ENCODE measurements at regions of chr5 and their contacts with region 1.

Region 1: DNA sequence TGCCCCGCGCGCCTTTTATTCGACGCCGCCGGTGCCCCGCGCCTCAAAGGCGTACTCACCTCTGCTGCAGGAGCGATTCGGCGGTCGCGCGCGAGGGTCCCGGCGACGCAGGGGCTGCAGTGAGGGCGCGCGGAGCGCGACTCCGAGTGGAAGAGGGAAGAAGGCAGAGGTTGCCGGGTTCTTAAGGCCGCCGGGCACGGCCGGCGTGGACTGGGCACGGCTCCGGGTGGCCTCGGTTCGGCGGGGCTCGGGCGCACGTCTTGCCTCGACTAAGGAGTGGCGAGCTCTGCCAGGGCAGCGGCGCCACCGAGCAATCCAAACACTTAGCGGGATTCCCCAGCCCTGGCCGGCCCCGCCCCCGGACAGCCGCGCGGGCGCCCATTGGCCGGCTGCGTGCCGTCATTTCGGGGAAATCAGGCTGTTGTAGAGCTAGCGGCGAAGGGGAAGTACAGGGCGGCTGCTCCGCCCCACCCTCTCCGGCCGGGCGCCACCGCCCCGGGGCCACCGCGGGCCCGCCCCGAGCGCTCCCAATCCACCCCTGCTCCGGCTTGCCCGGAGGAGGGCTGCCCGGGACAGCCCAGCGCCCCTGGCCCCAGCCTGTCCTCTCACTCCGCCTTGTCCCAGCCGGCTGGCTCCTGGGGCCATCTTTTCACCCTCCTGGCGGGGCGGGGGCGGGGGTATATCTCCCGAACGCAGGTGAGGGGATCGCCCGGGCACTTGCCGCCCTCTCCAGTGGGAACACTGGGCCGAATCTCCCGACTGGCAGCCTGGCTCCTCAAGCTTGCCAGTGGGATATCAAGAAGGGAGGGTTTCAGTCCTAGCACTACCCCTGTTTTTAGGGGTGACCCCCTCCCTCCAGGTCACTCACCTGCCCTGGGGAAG is at the start of gene IRF1:
- DNase-seq: peak; percentile 97 to 99 (median 98)
- ATAC-seq: peak; percentile 78 to 80
- H3K4me3 Mint-ChIP-seq: peak within 1 kb of the TSS; percentile 93 to 97 (median 96)
- H3K27ac Mint-ChIP-seq: peak within 1 kb of the TSS; percentile 96 to 98 (median 98)
- H3K4me1 Mint-ChIP-seq: peaks cover 46 to 79% (median 76%) of the 10 kb centered on the region in 4 donors
- H3K27me3 Mint-ChIP-seq: no peaks in the 10 kb centered on the region
- polyA plus RNA-seq, gene IRF1: 108 to 218 (median 141) TPM

Region 2: GRCh38 chr5:132064738-132065331 is 425.9 kb before region 1 on chr5:
- POLR2A ChIA-PET with region 1: no interaction called
- DNase-seq: peak; percentile 49 to 83 (median 70)
- ATAC-seq: peak; percentile 74 to 80
- H3K4me3 Mint-ChIP-seq: no peak overlapping the region
- H3K27ac Mint-ChIP-seq: peak overlapping the region in 1 of 10 donors; percentile 37
- H3K4me1 Mint-ChIP-seq: peaks cover 7 to 13% (median 10%) of the 10 kb centered on the region in 4 donors
- H3K27me3 Mint-ChIP-seq: no peaks in the 10 kb centered on the region

Region 3: GRCh38 chr5:132369474-132370180 is 121.1 kb before region 1 on chr5 and contains the start of gene SLC22A5:
- POLR2A ChIA-PET with region 1: interaction called, 12 read pairs
- DNase-seq: peak; percentile 60 to 83 (median 75)
- ATAC-seq: peak; percentile 92 to 93
- H3K4me3 Mint-ChIP-seq: peak within 1 kb of the TSS; percentile 75 to 91 (median 87)
- H3K27ac Mint-ChIP-seq: peak within 1 kb of the TSS; percentile 83 to 94 (median 90)
- H3K4me1 Mint-ChIP-seq: peaks cover 18 to 35% (median 32%) of the 10 kb centered on the region in 4 donors
- H3K27me3 Mint-ChIP-seq: no peaks in the 10 kb centered on the region
- polyA plus RNA-seq, gene SLC22A5: 1.9 to 3.2 (median 2.0) TPM

Region 4: GRCh38 chr5:132394667-132395259 is 96.0 kb before region 1 on chr5:
- POLR2A ChIA-PET with region 1: interaction called, 96 read pairs
- DNase-seq: no peak
- ATAC-seq: peak in 1 of 2 donors; percentile 37
- H3K4me3 Mint-ChIP-seq: peak overlapping the region in 4 of 10 donors; percentile 2 to 14 (median 9)
- H3K27ac Mint-ChIP-seq: peak overlapping the region in 9 of 10 donors; percentile 48 to 92 (median 80)
- H3K4me1 Mint-ChIP-seq: peaks cover 24 to 71% (median 62%) of the 10 kb centered on the region in 4 donors
- H3K27me3 Mint-ChIP-seq: no peaks in the 10 kb centered on the region

Region 5: GRCh38 chr5:132419502-132420468 is 70.9 kb before region 1 on chr5:
- POLR2A ChIA-PET with region 1: interaction called, 142 read pairs
- DNase-seq: peak; percentile 27 to 78 (median 60)
- ATAC-seq: peak; percentile 65 to 69
- H3K4me3 Mint-ChIP-seq: peak overlapping the region; percentile 69 to 87 (median 78)
- H3K27ac Mint-ChIP-seq: peak overlapping the region; percentile 85 to 98 (median 94)
- H3K4me1 Mint-ChIP-seq: peaks cover 46 to 100% (median 91%) of the 10 kb centered on the region in 4 donors
- H3K27me3 Mint-ChIP-seq: no peaks in the 10 kb centered on the region

Region 6: GRCh38 chr5:132431632-132432031 is 59.1 kb before region 1 on chr5:
- POLR2A ChIA-PET with region 1: interaction called, 142 read pairs
- DNase-seq: no peak
- ATAC-seq: peak in 1 of 2 donors; percentile 16
- H3K4me3 Mint-ChIP-seq: peak overlapping the region in 7 of 10 donors; percentile 1 to 76 (median 48)
- H3K27ac Mint-ChIP-seq: peak overlapping the region in 9 of 10 donors; percentile 51 to 100 (median 93)
- H3K4me1 Mint-ChIP-seq: peaks cover 60 to 96% (median 90%) of the 10 kb centered on the region in 4 donors
- H3K27me3 Mint-ChIP-seq: no peaks in the 10 kb centered on the region

Region 7: DNA sequence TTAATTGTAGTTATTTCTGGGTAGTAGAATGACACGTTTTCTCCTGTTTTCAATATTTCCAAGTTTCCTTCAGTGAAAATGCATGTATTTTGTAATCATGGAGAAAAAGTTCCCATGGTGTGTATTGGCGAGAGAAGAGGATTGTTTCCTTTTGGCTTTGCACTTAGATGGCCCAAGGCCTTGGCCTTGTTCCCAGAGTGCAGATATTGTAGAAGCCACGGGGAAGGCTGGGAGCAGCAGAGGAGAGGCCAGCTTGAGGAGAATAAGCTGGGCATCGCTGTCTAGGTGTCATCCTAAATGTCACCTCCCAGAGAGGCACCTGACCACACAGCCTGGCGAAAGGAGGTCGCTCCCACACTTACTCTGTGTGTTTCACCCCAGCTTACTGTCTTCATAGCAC is 44.1 kb before region 1 on chr5:
- POLR2A ChIA-PET with region 1: interaction called, 24 read pairs
- DNase-seq: no peak
- ATAC-seq: peak in 1 of 2 donors; percentile 40
- H3K4me3 Mint-ChIP-seq: peak overlapping the region; percentile 6 to 74 (median 48)
- H3K27ac Mint-ChIP-seq: peak overlapping the region in 8 of 10 donors; percentile 25 to 89 (median 68)
- H3K4me1 Mint-ChIP-seq: peaks cover 47 to 91% (median 84%) of the 10 kb centered on the region in 4 donors
- H3K27me3 Mint-ChIP-seq: no peaks in the 10 kb centered on the region

Region 8: GRCh38 chr5:132466433-132467286 is 24.1 kb before region 1 on chr5:
- POLR2A ChIA-PET with region 1: interaction called, 648 read pairs
- DNase-seq: peak in 8 of 10 donors; percentile 40 to 79 (median 73)
- ATAC-seq: peak; percentile 78 to 79
- H3K4me3 Mint-ChIP-seq: peak overlapping the region; percentile 70 to 83 (median 76)
- H3K27ac Mint-ChIP-seq: peak overlapping the region; percentile 90 to 97 (median 95)
- H3K4me1 Mint-ChIP-seq: peaks cover 48 to 100% (median 96%) of the 10 kb centered on the region in 4 donors
- H3K27me3 Mint-ChIP-seq: no peaks in the 10 kb centered on the region

Region 9: DNA sequence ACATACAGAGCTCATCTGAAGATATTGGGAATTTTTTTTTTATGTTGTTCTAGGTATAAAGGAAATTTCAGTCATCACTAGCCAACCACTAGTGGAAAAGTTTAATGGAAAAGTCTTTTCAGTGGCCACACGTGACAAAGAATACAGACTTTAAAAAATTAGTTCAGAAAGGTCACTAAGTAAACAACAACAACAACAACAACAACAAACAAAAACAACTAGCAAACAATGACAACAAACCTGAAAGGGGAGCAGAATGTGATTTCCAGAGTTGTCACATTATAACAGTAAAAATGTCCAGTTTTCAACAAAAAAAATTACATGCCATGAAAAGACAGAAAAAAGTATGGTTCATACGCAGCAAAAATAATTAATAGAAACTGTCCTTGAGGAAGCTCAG is 18.5 kb after region 1 on chr5:
- POLR2A ChIA-PET with region 1: no interaction called
- DNase-seq: no peak
- ATAC-seq: no peak
- H3K4me3 Mint-ChIP-seq: no peak overlapping the region
- H3K27ac Mint-ChIP-seq: no peak overlapping the region
- H3K4me1 Mint-ChIP-seq: peaks cover 0 to 4% (median 0%) of the 10 kb centered on the region in 4 donors
- H3K27me3 Mint-ChIP-seq: peaks cover 14 to 47% (median 17%) of the 10 kb centered on the region in 5 donors

Region 10: DNA sequence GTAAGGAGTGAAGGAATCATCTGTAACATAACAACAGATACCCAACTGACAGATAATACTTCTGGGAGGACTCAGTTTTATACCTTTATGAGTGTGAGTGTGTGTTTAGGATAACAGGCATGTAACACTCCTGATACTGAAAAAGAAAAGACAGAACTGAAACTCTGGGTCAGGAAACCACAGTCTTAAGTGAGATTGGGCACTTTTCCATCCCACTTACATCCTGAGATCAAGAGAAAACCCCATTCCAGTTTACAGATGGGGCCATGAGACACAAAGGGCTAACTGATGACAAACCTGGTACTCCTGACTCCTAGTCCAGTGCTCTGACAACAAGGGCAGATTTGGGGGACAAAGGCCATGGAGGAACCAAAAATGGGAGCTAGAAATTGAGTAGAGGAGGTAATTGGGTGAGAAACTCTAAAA is 34.6 kb after region 1 on chr5:
- POLR2A ChIA-PET with region 1: no interaction called
- DNase-seq: no peak
- ATAC-seq: no peak
- H3K4me3 Mint-ChIP-seq: peak overlapping the region in 2 of 10 donors; percentile 12 to 16
- H3K27ac Mint-ChIP-seq: peak overlapping the region in 1 of 10 donors; percentile 49
- H3K4me1 Mint-ChIP-seq: peaks cover 6 to 49% (median 14%) of the 10 kb centered on the region in 4 donors
- H3K27me3 Mint-ChIP-seq: no peaks in the 10 kb centered on the region

Region 11: GRCh38 chr5:132673939-132674630 is 183.4 kb after region 1 on chr5 and contains the start of gene IL4:
- POLR2A ChIA-PET with region 1: no interaction called
- DNase-seq: no peak
- ATAC-seq: no peak
- H3K4me3 Mint-ChIP-seq: peak within 1 kb of the TSS in 1 of 10 donors; percentile 63
- H3K27ac Mint-ChIP-seq: peak within 1 kb of the TSS in 3 of 10 donors; percentile 4 to 66 (median 40)
- H3K4me1 Mint-ChIP-seq: peaks cover 0 to 8% (median 0%) of the 10 kb centered on the region in 4 donors
- H3K27me3 Mint-ChIP-seq: no peaks in the 10 kb centered on the region
- polyA plus RNA-seq, gene IL4: not detected